Naive thymus-derived CD4-positive, alpha-beta T cell (primary cell): ENCODE measurements at regions of chr11 and their contacts with region 1.

Region 1: DNA sequence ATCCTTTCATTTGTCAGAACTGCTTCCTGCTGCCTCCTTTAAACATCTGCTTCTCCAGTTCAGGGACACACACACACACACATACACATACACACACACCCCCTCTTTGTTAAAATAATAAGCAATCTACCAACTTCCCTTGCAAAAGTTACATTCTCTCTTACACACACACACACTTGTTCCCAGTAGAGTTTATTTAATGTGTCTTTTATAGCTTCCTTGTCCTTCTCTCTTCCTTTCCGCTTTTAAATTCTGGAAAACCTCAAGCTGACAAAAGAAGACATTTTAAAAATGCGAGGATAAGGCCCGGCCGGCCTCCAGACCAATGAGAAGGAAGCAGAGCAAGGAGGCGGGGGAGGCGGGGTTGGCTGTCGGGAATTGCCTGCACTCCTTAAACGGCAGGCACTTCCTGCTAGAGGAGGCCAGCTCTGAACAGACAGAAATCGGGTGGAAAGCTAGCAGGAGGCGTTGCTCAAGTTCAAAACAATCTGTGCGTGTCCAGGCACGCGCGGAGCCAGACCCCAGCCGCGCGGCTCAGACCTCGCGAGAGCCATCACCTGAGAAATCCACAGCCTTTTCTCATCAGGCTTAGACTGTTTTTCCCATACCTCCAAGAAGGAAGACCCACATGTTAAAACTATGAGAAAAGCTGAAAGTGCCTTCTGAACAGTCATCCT is 99.9 kb downstream of the MAML2 start:
- DNase-seq: peak; percentile 47 to 83 (median 66)
- ATAC-seq: peak; percentile 92
- H3K4me3 ChIP-seq: peak overlapping the region; percentile 63
- H3K4me3 Mint-ChIP-seq: peak overlapping the region; percentile 76 to 89 (median 84)
- H3K27ac ChIP-seq: peak overlapping the region; percentile 72
- H3K27ac Mint-ChIP-seq: peak overlapping the region; percentile 86 to 94 (median 92)
- H3K4me1 ChIP-seq: peaks cover 8 to 61% of the 10 kb centered on the region in 2 donors
- H3K4me1 Mint-ChIP-seq: peaks cover 37 to 72% (median 63%) of the 10 kb centered on the region in 7 donors
- H3K27me3 ChIP-seq: no peaks in the 10 kb centered on the region
- H3K27me3 Mint-ChIP-seq: no peaks in the 10 kb centered on the region

Region 2: DNA sequence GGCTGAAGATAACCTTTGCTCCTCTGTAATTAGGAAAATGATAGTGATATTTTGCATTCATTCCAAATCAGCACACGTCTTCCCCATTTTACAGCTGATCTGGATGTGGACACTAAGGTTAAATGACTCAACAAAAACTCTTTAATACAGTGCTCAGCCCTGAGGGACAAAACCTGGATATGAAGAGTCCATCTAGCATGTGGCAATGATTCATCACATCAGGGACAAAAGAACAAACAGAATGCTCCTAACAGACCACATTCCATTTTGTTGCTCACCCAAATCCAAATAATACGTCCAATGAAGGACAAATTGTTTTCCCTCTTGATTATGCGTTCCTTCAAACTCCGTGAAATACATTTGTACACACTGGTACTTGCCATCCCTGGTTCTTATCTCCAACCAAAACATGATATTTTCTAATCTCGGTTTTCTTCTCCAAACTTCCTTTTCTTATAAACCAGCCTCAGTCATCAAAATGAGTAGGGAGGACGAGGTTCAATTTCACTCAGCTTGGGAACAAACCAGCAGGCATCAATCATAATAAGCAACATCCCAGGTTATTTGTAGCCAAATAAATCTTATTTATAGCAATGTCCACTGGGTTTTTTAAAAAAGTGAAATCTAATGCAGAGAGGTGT is 265.5 kb before region 1 on chr11:
- CTCF ChIA-PET with region 1: no interaction called
- POLR2A ChIA-PET with region 1: no interaction called
- intact Hi-C with region 1: no loop called
- DNase-seq: no peak
- ATAC-seq: no peak
- H3K4me3 ChIP-seq: no peak overlapping the region
- H3K4me3 Mint-ChIP-seq: no peak overlapping the region
- H3K27ac ChIP-seq: no peak overlapping the region
- H3K27ac Mint-ChIP-seq: no peak overlapping the region
- H3K4me1 ChIP-seq: no peaks in the 10 kb centered on the region
- H3K4me1 Mint-ChIP-seq: peaks cover 0 to 8% (median 0%) of the 10 kb centered on the region in 7 donors
- H3K27me3 ChIP-seq: no peaks in the 10 kb centered on the region
- H3K27me3 Mint-ChIP-seq: no peaks in the 10 kb centered on the region

Region 3: GRCh38 chr11:96054870-96055705 is 188.0 kb before region 1 on chr11:
- CTCF ChIA-PET with region 1: interaction called, 7 read pairs
- POLR2A ChIA-PET with region 1: no interaction called
- intact Hi-C with region 1: loop called (anchors 1 to 2 kb)
- DNase-seq: peak in 5 of 9 donors; percentile 15 to 41 (median 29)
- ATAC-seq: peak; percentile 72
- H3K4me3 ChIP-seq: no peak overlapping the region
- H3K4me3 Mint-ChIP-seq: peak overlapping the region in 4 of 10 donors; percentile 4 to 63 (median 32)
- H3K27ac ChIP-seq: no peak overlapping the region
- H3K27ac Mint-ChIP-seq: peak overlapping the region in 8 of 9 donors; percentile 15 to 88 (median 70)
- H3K4me1 ChIP-seq: peaks cover 0 to 16% of the 10 kb centered on the region in 2 donors
- H3K4me1 Mint-ChIP-seq: peaks cover 18 to 89% (median 77%) of the 10 kb centered on the region in 7 donors
- H3K27me3 ChIP-seq: no peaks in the 10 kb centered on the region
- H3K27me3 Mint-ChIP-seq: no peaks in the 10 kb centered on the region

Region 4: DNA sequence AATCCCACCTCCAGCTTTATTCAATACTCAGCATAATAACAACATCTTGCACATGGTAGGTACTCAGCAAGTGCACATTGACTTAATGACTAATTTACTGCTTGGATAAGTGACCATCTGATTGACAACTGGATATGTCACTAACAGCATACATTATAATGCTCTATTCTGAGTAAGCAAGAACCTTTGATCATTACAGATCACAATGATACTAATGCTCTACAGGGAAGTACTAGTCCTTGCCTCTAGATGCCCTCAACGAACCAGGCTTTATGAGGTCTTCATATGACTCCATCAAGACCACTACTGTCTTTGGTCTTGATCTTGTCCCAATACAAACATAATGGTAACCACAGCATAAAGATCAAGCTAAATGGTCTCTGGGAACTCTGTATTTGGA is 151.6 kb before region 1 on chr11:
- CTCF ChIA-PET with region 1: interaction called, 4 read pairs
- POLR2A ChIA-PET with region 1: no interaction called
- intact Hi-C with region 1: loop called in 1 of 2 experiments (anchors 2 kb)
- DNase-seq: peak in 7 of 9 donors; percentile 10 to 46 (median 23)
- ATAC-seq: peak; percentile 88
- H3K4me3 ChIP-seq: no peak overlapping the region
- H3K4me3 Mint-ChIP-seq: peak overlapping the region in 1 of 10 donors; percentile 6
- H3K27ac ChIP-seq: no peak overlapping the region
- H3K27ac Mint-ChIP-seq: peak overlapping the region in 5 of 9 donors; percentile 56 to 81 (median 71)
- H3K4me1 ChIP-seq: peaks cover 0 to 5% of the 10 kb centered on the region in 2 donors
- H3K4me1 Mint-ChIP-seq: peaks cover 30 to 95% (median 59%) of the 10 kb centered on the region in 7 donors
- H3K27me3 ChIP-seq: no peaks in the 10 kb centered on the region
- H3K27me3 Mint-ChIP-seq: no peaks in the 10 kb centered on the region

Region 5: GRCh38 chr11:96207459-96208449 is 35.4 kb before region 1 on chr11:
- CTCF ChIA-PET with region 1: interaction called, 3 read pairs
- POLR2A ChIA-PET with region 1: interaction called, 7 read pairs
- intact Hi-C with region 1: loop called (anchors 1 to 5 kb)
- DNase-seq: peak in 7 of 9 donors; percentile 43 to 73 (median 57)
- ATAC-seq: peak; percentile 70
- H3K4me3 ChIP-seq: peak overlapping the region; percentile 9
- H3K4me3 Mint-ChIP-seq: peak overlapping the region; percentile 51 to 84 (median 74)
- H3K27ac ChIP-seq: peak overlapping the region; percentile 62
- H3K27ac Mint-ChIP-seq: peak overlapping the region; percentile 86 to 99 (median 95)
- H3K4me1 ChIP-seq: peaks cover 70 to 93% of the 10 kb centered on the region in 2 donors
- H3K4me1 Mint-ChIP-seq: peaks cover 45 to 96% (median 92%) of the 10 kb centered on the region in 7 donors
- H3K27me3 ChIP-seq: no peaks in the 10 kb centered on the region
- H3K27me3 Mint-ChIP-seq: no peaks in the 10 kb centered on the region

Region 6: DNA sequence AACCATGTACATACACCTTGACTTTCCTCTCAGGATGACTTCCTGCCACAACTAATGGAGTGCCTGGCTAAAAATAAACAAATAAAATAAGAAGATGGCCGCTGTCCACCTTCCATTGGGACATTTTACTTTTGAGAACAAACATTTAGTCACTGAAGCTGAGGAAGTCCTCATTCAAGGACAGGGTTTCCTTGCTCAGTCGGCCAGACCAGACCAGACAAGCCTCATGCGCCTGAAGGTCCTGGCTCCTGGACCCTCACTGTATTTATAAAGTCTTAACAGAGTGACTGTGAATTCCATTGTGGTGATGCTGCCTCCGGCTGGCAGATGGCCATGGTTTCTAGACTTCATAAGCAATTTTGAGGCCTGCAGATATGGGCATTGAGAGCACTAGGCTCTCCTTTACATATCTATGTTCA is 14.6 kb before region 1 on chr11:
- CTCF ChIA-PET with region 1: interaction called, 7 read pairs
- POLR2A ChIA-PET with region 1: interaction called, 23 read pairs
- intact Hi-C with region 1: loop called in 1 of 2 experiments (anchors 1 kb)
- DNase-seq: no peak
- ATAC-seq: no peak
- H3K4me3 ChIP-seq: no peak overlapping the region
- H3K4me3 Mint-ChIP-seq: peak overlapping the region in 7 of 10 donors; percentile 13 to 83 (median 57)
- H3K27ac ChIP-seq: peak overlapping the region; percentile 43
- H3K27ac Mint-ChIP-seq: peak overlapping the region in 7 of 9 donors; percentile 63 to 92 (median 87)
- H3K4me1 ChIP-seq: peaks cover 0 to 42% of the 10 kb centered on the region in 2 donors
- H3K4me1 Mint-ChIP-seq: peaks cover 43 to 96% (median 85%) of the 10 kb centered on the region in 7 donors
- H3K27me3 ChIP-seq: no peaks in the 10 kb centered on the region
- H3K27me3 Mint-ChIP-seq: no peaks in the 10 kb centered on the region